ENCODE measurements at regions of chr10 and their contacts with region 1.

Region 1: DNA sequence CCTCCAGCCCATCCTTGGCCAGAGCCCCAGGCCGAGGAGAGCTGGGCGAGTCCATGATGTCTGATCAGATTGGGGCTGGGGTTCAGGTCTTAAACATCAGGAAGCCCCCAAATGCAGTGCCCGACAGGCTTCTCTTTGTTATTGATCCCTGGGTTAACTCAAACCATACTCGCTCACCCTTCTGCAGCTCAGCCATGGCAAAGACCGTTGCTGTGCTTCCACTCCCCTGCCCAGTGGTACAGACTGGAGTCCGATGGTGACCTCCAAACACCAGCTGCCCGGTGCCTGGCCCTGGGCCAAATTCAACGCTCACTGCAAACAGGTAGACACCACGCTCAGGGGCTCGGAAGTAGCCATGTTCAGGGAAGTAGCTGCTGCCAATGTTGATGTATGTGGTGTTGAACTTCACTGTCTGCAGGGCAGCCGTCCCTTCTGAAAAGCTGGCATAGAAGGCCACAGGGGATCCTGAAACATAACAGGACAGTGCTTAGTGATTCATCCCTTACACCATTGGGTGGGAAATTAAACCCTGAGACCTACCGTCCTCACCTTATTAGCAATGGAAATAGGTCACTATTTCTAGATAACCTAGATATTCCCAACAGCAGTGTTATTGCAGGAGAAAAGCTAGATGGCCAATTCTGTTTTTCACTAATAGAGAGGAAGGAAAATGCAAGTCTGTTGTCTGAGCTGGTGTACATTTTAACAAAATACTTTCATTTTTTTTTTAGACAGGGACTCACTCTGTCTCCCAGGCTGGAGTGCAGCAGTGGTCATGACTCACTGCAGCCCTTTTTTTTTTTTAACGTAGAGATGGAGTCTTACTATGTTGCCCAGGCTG is 20.5 kb downstream of the MMRN2 start:
- DNase-seq: no peak
- H3K4me3 Mint-ChIP-seq: no peak overlapping the region
- H3K27ac Mint-ChIP-seq: no peak overlapping the region
- H3K4me1 Mint-ChIP-seq: peaks cover 7% of the 10 kb centered on the region
- H3K27me3 Mint-ChIP-seq: no peaks in the 10 kb centered on the region

Region 2: GRCh38 chr10:86965986-86966654 is 29.2 kb after region 1 on chr10:
- intact Hi-C with region 1: loop called (anchors 1 kb)
- DNase-seq: no peak
- H3K4me3 Mint-ChIP-seq: peak overlapping the region; percentile 43
- H3K27ac Mint-ChIP-seq: peak overlapping the region; percentile 43
- H3K4me1 Mint-ChIP-seq: peaks cover 18% of the 10 kb centered on the region
- H3K27me3 Mint-ChIP-seq: peaks cover 18% of the 10 kb centered on the region